Tibial artery (tissue), 4 donors: ENCODE measurements at regions of chr11 and their contacts with region 1.

Region 1: GRCh38 chr11:68694431-68695297 is 10.3 kb downstream of the GAL start:
- DNase-seq: no peak
- H3K4me3 ChIP-seq: no peak overlapping the region
- H3K27ac ChIP-seq: no peak overlapping the region
- H3K4me1 ChIP-seq: no peaks in the 10 kb centered on the region
- H3K27me3 ChIP-seq: peaks cover 0 to 29% of the 10 kb centered on the region in 2 donors
- CTCF ChIP-seq: no peak

Region 2: GRCh38 chr11:68767672-68768071 is 73.0 kb after region 1 on chr11:
- intact Hi-C with region 1: loop called (anchors 2 kb)
- DNase-seq: no peak
- H3K4me3 ChIP-seq: no peak overlapping the region
- H3K27ac ChIP-seq: no peak overlapping the region
- H3K4me1 ChIP-seq: no peaks in the 10 kb centered on the region
- H3K27me3 ChIP-seq: no peaks in the 10 kb centered on the region
- CTCF ChIP-seq: no peak